AG04449 (cell line): ENCODE measurements at regions of chr12 and their contacts with region 1.

Region 1: GRCh38 chr12:118135788-118136558 is at the start of gene PEBP1:
- DNase-seq: peak; percentile 42
- H3K4me3 ChIP-seq: peak within 1 kb of the TSS; percentile 93
- CTCF ChIP-seq: no peak

Region 2: GRCh38 chr12:117874842-117875434 is 261.0 kb before region 1 on chr12:
- CTCF ChIA-PET with region 1: interaction called, 12 read pairs
- POLR2A ChIA-PET with region 1: no interaction called
- DNase-seq: no peak
- H3K4me3 ChIP-seq: no peak overlapping the region
- CTCF ChIP-seq: peak; percentile 83

Region 3: DNA sequence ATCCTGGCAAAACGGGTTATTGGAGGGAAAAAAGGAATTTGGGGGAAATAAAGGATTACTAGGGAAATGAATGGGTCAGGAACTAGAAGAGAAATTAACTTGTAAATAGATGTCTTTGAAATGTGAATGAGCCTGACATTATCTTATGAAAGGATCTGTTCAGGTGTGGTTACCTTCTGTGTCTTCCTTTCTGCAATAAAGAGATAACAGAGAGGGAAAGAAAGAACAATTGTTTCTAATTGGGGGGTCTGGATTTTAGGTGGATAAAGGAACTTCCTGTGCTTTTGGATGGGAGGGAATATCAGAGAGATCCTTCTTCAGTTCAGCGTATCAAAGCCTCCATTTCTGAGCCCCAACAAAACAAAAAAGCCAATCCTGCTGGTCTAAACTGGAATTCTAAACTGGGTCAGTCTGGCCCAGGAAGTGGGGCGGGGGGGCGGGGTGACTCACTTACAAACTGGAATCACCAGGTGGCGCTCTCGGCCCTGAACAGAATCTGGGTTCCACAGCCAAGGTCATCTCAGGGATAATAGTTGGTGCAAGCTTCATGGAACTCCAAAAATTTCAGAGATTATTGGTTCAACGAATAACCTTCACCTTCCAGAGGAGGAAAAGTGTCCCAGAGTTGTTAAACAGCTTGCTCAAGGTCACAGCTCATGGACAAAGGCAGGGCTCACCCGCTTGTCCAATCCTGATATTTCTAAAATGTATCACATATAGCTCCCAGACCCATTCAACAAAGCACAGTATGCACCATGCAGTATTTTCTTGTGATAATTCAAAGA is 15.2 kb before region 1 on chr12:
- CTCF ChIA-PET with region 1: interaction called, 44 read pairs
- POLR2A ChIA-PET with region 1: no interaction called
- DNase-seq: no peak
- H3K4me3 ChIP-seq: no peak overlapping the region
- CTCF ChIP-seq: peak; percentile 80

Region 4: DNA sequence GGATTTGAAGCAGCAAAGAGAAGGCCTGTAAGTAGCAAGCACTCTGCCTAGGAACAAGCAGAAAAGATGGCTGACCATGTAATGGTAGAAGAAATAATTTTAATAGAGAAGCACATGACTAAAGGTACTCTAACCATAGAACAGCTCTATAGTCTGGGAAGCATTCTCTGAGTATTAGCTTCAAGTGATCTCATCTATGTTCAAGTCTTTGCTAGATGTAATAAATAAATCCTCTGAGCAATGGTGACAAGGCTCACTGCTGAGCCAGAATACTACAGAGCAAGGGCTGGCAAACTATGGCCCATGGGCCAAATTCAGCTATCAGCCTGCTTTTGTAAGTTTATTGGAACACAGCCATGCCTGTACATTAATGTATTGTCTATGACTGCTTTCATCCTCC is 84.7 kb after region 1 on chr12:
- CTCF ChIA-PET with region 1: no interaction called
- POLR2A ChIA-PET with region 1: no interaction called
- DNase-seq: no peak
- H3K4me3 ChIP-seq: no peak overlapping the region
- CTCF ChIP-seq: no peak

Region 5: GRCh38 chr12:118271790-118272417 is 135.9 kb after region 1 on chr12:
- CTCF ChIA-PET with region 1: no interaction called
- POLR2A ChIA-PET with region 1: no interaction called
- DNase-seq: no peak
- H3K4me3 ChIP-seq: no peak overlapping the region
- CTCF ChIP-seq: no peak

Region 6: DNA sequence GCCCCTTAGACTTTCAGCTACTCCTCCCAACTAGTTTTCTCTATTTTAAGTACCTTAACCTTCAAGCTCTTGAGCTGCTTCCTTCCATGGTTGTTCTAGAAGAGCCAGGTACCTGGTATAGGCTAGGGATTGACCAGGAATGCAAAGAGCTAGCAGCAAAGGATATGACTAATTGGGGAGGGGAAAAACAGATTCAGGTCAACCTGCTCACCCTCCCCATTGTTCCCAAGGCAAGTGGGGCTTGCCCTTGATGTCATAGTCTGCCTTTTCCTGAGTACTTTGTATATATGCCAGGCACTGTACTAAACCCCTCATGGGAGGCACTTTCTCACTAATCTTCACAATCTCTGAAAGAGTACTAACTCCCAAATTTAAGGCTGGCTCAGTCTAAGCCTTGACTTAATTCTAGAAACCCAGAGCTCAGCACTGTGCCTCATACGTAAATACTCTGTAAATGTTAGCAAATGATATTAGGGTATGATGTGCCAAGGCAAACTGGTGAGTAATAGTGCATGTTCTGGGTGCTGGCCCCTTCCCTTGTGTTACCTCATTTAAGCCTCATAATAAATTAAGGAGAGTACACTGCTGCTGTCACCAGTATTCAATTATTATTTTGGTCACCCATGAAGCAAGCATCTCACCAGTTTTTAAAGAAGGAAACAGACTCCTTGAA is 282.5 kb after region 1 on chr12:
- CTCF ChIA-PET with region 1: no interaction called
- POLR2A ChIA-PET with region 1: no interaction called
- DNase-seq: no peak
- H3K4me3 ChIP-seq: no peak overlapping the region
- CTCF ChIP-seq: no peak

Region 7: DNA sequence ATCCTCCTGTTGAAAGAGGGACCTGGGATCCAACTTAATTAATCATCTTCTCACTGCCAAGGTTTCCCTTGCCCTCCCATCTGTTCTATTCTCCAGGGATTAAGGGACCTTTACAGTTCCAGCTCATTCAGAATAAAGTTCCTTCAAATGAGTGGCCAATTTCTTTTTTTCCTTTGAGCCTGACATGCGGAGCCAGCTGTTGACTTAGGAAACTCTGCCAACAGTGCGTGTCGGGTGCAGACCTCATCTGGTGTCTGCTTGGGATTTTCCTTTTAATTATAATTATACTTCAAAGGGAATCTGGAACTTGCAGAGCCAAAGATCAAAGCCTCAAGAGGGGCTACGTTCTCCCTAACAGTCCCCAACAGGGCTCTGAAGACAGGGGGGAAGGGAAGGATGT is 1263.3 kb after region 1 on chr12:
- CTCF ChIA-PET with region 1: no interaction called
- POLR2A ChIA-PET with region 1: no interaction called
- DNase-seq: no peak
- H3K4me3 ChIP-seq: no peak overlapping the region
- CTCF ChIP-seq: no peak